ENCODE measurements at regions of chr3 and their contacts with region 1.

Region 1: DNA sequence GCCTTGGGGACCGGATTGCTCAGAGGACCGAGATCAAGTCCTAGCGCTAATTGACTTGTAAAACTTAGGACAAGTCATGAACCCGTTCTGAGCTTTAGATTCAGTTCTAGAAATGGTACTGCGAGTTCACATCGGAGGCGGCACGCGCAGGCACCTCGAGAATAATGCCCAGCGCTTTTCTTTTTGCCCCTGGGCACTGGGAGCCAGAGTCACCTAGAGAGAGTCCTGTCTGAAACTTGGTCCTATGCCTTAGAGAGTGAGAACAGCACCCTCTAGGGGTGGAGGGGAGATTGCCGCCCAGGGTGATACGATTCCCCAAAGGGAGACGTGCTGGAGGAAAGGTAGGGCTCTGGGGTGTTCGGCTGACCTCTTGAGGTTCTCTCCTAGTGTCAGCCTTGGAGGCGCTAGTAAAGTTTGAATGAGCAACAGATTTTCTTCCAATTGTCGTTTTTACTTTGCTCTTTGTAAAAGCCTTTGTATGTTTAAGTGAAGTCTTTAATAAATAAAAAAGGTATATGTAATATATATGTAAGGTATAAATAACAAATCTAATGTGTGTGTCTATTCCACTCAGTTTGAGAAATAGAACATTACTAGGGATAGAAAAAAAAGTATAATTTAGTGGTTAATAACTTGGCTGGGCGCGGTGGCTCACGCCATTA is 826 bp downstream of the EEF1AKMT4 start:
- DNase-seq: peak; percentile 79
- ATAC-seq: peak; percentile 68
- H3K4me3 Mint-ChIP-seq: peak overlapping the region; percentile 90
- H3K27ac Mint-ChIP-seq: peak overlapping the region; percentile 94
- H3K4me1 Mint-ChIP-seq: peaks cover 19% of the 10 kb centered on the region
- H3K27me3 Mint-ChIP-seq: no peaks in the 10 kb centered on the region
- CTCF ChIP-seq: peak; percentile 88

Region 2: DNA sequence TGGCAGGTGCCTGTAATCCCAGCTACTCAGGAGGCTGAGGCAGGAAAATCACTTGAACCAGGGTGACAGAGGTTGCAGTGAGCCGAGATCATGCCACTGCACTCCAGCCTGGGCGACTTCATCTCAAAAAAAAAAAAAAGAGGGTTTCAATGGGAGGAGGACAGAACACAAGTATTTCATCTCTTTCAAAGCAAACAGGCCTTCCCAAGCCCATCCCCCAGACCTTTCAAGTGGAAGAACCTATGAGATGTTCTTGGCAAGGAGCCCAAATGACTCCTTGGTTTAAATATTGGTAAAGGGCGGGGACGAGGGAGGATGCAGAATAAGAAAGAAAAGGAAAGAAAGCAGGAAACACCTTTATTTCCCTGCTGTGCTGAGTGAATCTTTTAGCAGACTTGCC is 759.6 kb before region 1 on chr3:
- CTCF ChIA-PET with region 1: no interaction called
- POLR2A ChIA-PET with region 1: no interaction called
- intact Hi-C with region 1: no loop called
- DNase-seq: no peak
- ATAC-seq: no peak
- H3K4me3 Mint-ChIP-seq: no peak overlapping the region
- H3K27ac Mint-ChIP-seq: no peak overlapping the region
- H3K4me1 Mint-ChIP-seq: peaks cover 12% of the 10 kb centered on the region
- H3K27me3 Mint-ChIP-seq: no peaks in the 10 kb centered on the region
- CTCF ChIP-seq: no peak

Region 3: GRCh38 chr3:183884427-183885296 is 365.6 kb before region 1 on chr3 and contains the start of gene PARL:
- CTCF ChIA-PET with region 1: no interaction called
- POLR2A ChIA-PET with region 1: interaction called, 3 read pairs
- intact Hi-C with region 1: loop called (anchors 1 kb)
- DNase-seq: peak; percentile 94
- ATAC-seq: peak; percentile 99
- H3K4me3 Mint-ChIP-seq: peak within 1 kb of the TSS; percentile 98
- H3K27ac Mint-ChIP-seq: peak within 1 kb of the TSS; percentile 85
- H3K4me1 Mint-ChIP-seq: peaks cover 36% of the 10 kb centered on the region
- H3K27me3 Mint-ChIP-seq: peaks cover 2% of the 10 kb centered on the region
- CTCF ChIP-seq: no peak
- total RNA-seq, gene PARL: 57.6 and 57.8 TPM in 2 replicates

Region 4: GRCh38 chr3:184135149-184135910 is 115.0 kb before region 1 on chr3 and contains the start of gene EIF2B5:
- CTCF ChIA-PET with region 1: interaction called, 3 read pairs
- POLR2A ChIA-PET with region 1: interaction called, 6 read pairs
- intact Hi-C with region 1: loop called (anchors 1 kb)
- DNase-seq: peak; percentile 80
- ATAC-seq: peak; percentile 90
- H3K4me3 Mint-ChIP-seq: peak within 1 kb of the TSS; percentile 98
- H3K27ac Mint-ChIP-seq: peak within 1 kb of the TSS; percentile 96
- H3K4me1 Mint-ChIP-seq: peaks cover 33% of the 10 kb centered on the region
- H3K27me3 Mint-ChIP-seq: no peaks in the 10 kb centered on the region
- CTCF ChIP-seq: no peak
- total RNA-seq, gene EIF2B5: 72.0 and 74.2 TPM in 2 replicates

Region 5: GRCh38 chr3:184185461-184186308 is 64.6 kb before region 1 on chr3 and contains the start of gene ABCF3:
- CTCF ChIA-PET with region 1: no interaction called
- POLR2A ChIA-PET with region 1: interaction called, 3 read pairs
- intact Hi-C with region 1: loop called (anchors 1 kb)
- DNase-seq: peak; percentile 99
- ATAC-seq: peak; percentile 95
- H3K4me3 Mint-ChIP-seq: peak within 1 kb of the TSS; percentile 99
- H3K27ac Mint-ChIP-seq: peak within 1 kb of the TSS; percentile 93
- H3K4me1 Mint-ChIP-seq: peaks cover 40% of the 10 kb centered on the region
- H3K27me3 Mint-ChIP-seq: no peaks in the 10 kb centered on the region
- CTCF ChIP-seq: no peak
- total RNA-seq, gene ABCF3: 78.0 and 86.7 TPM in 2 replicates

Region 6: GRCh38 chr3:184289426-184289938 is 39.2 kb after region 1 on chr3:
- CTCF ChIA-PET with region 1: no interaction called
- POLR2A ChIA-PET with region 1: no interaction called
- intact Hi-C with region 1: loop called (anchors 2 kb)
- DNase-seq: peak; percentile 30
- ATAC-seq: peak; percentile 65
- H3K4me3 Mint-ChIP-seq: no peak overlapping the region
- H3K27ac Mint-ChIP-seq: no peak overlapping the region
- H3K4me1 Mint-ChIP-seq: peaks cover 3% of the 10 kb centered on the region
- H3K27me3 Mint-ChIP-seq: peaks cover 15% of the 10 kb centered on the region
- CTCF ChIP-seq: no peak

Region 7: GRCh38 chr3:184335661-184336546 is 85.6 kb after region 1 on chr3:
- CTCF ChIA-PET with region 1: no interaction called
- POLR2A ChIA-PET with region 1: no interaction called
- intact Hi-C with region 1: loop called (anchors 1 kb)
- DNase-seq: peak; percentile 92
- ATAC-seq: peak; percentile 79
- H3K4me3 Mint-ChIP-seq: peak overlapping the region; percentile 84
- H3K27ac Mint-ChIP-seq: peak overlapping the region; percentile 85
- H3K4me1 Mint-ChIP-seq: peaks cover 33% of the 10 kb centered on the region
- H3K27me3 Mint-ChIP-seq: peaks cover 5% of the 10 kb centered on the region
- CTCF ChIP-seq: no peak

Region 8: DNA sequence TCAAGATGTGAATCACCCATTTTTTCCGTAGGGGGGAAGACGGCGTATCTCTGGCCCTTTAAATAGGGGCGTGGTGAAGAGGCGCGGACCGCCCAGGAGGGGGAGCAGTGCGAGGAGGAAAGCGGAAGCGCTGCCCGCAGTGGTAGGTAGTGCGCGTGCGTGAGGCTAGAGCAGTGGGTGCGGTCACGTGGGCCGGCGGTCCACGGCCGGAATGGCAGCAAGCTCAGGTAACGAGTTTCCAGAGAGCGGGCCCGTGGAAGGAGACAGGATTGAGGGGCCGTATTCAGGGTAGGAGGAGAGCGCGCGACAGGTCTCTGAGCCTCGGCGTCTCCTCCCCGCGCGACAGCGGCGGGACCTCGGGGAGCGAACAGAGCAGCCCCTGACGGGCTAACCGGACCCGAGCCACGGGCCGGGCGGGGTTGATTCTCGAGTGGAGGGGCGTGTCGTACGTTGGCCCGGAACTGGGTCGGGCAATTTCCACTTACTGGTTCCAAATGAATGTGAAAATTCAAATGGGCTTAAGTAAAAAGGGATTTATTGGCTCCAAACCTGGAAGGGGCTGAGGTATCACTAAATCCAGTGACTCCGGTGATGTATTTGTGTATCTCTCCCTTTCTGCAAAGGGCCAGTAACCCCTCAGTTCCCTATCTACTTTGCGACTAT is 561.8 kb after region 1 on chr3 and contains the start of gene VPS8:
- CTCF ChIA-PET with region 1: no interaction called
- POLR2A ChIA-PET with region 1: no interaction called
- intact Hi-C with region 1: loop called (anchors 2 kb)
- DNase-seq: peak; percentile 95
- ATAC-seq: peak; percentile 92
- H3K4me3 Mint-ChIP-seq: peak within 1 kb of the TSS; percentile 96
- H3K27ac Mint-ChIP-seq: peak within 1 kb of the TSS; percentile 96
- H3K4me1 Mint-ChIP-seq: peaks cover 24% of the 10 kb centered on the region
- H3K27me3 Mint-ChIP-seq: no peaks in the 10 kb centered on the region
- CTCF ChIP-seq: no peak
- total RNA-seq, gene VPS8: 57.4 and 68.8 TPM in 2 replicates